Mammary epithelial cell (primary cell): ENCODE measurements at regions of chr17 and their contacts with region 1.

Region 1: DNA sequence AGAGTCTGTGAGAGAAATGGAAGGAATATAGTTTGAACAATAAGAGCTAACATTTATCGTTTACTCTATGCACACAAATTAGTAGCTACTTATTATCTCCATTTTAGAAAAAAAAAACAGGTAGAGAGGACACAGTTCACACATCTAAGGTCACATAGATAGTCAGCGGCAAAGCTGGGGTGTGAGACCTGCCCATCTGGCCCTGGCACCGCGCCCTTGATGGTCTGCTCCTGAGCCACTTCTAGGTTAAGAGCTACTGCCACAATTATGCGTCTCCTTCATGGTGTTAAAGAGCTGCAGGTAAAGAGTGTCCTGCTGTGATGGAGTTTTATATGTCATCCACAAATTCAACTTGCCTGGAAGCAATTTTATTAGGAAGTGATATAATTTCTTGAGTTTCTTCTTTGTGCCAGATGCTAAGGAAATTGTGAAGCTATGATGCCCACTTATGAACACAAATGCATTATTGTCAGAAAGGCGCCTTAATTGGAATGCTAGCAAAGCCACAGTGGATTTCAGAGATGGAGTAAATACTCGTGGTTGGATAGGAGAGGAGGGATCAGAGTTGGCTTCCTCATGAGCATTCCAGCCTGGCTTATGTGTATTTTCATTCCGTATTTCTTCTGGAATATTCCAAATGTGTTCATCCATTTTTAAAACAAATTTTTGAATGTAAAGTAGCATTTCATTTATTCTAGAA is 21.3 kb upstream of the MFSD6L start:
- DNase-seq: no peak
- H3K4me3 ChIP-seq: no peak overlapping the region
- H3K27ac ChIP-seq: no peak overlapping the region
- H3K4me1 ChIP-seq: no peaks in the 10 kb centered on the region
- H3K27me3 ChIP-seq: peaks cover 2% of the 10 kb centered on the region
- CTCF ChIP-seq: no peak

Region 2: GRCh38 chr17:8753976-8754440 is 66.5 kb before region 1 on chr17:
- CTCF ChIA-PET with region 1: no interaction called
- dilution Hi-C with region 1: loop called (anchors 5 kb)
- in situ Hi-C with region 1: no loop called
- intact Hi-C with region 1: no loop called
- DNase-seq: peak; percentile 20
- H3K4me3 ChIP-seq: no peak overlapping the region
- H3K27ac ChIP-seq: no peak overlapping the region
- H3K4me1 ChIP-seq: no peaks in the 10 kb centered on the region
- H3K27me3 ChIP-seq: no peaks in the 10 kb centered on the region
- CTCF ChIP-seq: peak; percentile 56 to 65

Region 3: GRCh38 chr17:8776881-8777280 is 43.6 kb before region 1 on chr17:
- CTCF ChIA-PET with region 1: no interaction called
- dilution Hi-C with region 1: no loop called
- in situ Hi-C with region 1: no loop called
- intact Hi-C with region 1: loop called (anchors 5 kb)
- DNase-seq: no peak
- H3K4me3 ChIP-seq: no peak overlapping the region
- H3K27ac ChIP-seq: no peak overlapping the region
- H3K4me1 ChIP-seq: no peaks in the 10 kb centered on the region
- H3K27me3 ChIP-seq: no peaks in the 10 kb centered on the region
- CTCF ChIP-seq: no peak

Region 4: DNA sequence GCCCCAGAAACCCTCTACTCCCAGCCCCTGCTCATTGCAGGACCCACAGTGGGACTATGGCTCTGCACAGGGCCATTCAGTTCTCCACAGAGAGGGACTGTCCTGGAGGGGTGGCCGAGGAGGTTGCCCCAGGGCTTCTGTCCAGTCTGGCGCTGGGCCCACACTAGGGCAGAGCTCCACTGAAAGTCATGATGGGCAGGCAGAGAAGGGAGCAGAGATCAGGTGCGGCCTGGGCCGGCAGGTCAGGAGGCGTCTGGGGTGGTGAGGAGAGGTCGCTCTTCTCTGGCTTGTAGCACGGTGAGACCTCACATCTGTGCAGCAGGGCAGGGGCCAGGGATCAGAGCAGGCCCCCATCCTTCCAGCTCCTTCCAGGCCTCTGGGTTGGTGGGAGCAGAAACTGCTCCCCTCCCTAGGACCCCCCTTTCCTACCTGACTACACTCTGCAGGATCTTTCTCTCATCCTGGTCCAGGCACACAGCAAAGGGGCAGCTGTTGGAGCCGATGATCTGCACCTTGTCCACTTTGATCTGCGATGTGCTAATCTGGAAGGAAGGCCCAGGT is 60.1 kb after region 1 on chr17:
- CTCF ChIA-PET with region 1: no interaction called
- dilution Hi-C with region 1: no loop called
- in situ Hi-C with region 1: no loop called
- intact Hi-C with region 1: loop called (anchors 2 kb)
- DNase-seq: no peak
- H3K4me3 ChIP-seq: no peak overlapping the region
- H3K27ac ChIP-seq: no peak overlapping the region
- H3K4me1 ChIP-seq: no peaks in the 10 kb centered on the region
- H3K27me3 ChIP-seq: no peaks in the 10 kb centered on the region
- CTCF ChIP-seq: no peak